Posterior vena cava (tissue), 2 donors: ENCODE measurements at regions of chr3 and their contacts with region 1.

Region 1: DNA sequence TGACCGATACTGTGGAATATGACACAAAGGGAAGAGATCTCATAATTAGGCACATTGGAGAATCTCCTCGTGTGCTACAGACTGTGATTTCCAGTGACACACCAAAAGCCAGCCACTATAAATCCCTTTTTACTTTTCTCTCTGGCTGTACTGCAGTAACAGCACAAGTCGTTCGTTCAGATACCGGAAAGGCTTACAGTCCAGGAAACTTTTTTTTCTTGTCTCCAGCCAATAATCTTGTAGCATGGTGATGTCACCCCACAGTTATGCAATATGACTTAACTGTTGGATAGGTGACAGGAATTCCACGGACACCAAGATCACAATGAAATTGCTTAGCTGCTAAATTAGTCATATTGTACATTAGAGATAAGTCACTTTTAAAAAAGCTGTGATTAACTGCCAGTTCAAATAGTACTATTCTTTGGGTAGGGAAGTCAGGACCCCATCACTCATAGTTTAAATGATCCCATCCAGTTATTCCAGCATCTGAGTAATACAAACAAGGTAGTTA is 36.3 kb upstream of the TSC22D2 start:
- DNase-seq: no peak

Region 2: GRCh38 chr3:150238998-150239619 is 132.7 kb before region 1 on chr3:
- intact Hi-C with region 1: loop called in 1 of 2 experiments (anchors 10 kb)
- DNase-seq: no peak